Naive thymus-derived CD4-positive, alpha-beta T cell (primary cell): ENCODE measurements at regions of chr5 and their contacts with region 1.

Region 1: DNA sequence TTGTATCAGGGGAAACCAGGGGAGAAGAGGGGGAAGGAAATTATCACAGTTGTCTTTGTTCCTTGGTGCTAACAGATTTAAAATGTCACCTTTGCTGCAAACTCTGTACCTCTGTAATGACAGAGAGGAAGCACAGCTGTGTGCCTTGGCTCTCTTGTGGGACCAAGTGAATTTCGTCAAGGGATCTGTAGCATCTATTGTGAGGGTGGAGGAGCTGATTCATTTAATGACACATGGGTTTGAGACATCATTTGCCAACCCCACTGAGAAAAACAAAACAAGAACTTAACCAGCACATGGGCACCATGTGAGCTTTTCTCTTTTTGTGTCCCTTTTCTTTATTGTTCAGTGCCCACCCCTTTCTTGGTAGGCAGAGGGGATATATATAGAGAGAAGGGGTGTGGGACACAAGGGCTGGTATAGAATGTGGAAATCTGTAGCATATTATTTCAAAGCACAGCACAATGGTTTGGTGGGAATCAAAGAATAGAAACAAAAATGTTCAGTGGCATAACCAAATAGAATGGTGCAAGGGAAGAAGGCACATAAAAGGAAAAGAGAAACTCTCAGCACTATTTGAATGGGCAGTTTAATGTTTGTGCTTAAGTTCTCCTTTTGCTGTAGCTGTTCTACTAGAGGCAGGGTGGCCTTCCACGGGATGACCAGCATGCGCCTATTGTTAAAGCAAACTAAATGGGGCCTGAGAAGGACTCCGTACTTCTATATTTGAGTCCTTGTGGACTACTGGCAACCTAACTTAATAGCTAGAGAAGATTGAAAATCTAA is 63.3 kb downstream of the LIX1 start:
- DNase-seq: no peak
- ATAC-seq: peak; percentile 66
- H3K4me3 ChIP-seq: no peak overlapping the region
- H3K4me3 Mint-ChIP-seq: no peak overlapping the region
- H3K27ac ChIP-seq: no peak overlapping the region
- H3K27ac Mint-ChIP-seq: peak overlapping the region in 1 of 9 donors; percentile 18
- H3K4me1 ChIP-seq: no peaks in the 10 kb centered on the region
- H3K4me1 Mint-ChIP-seq: peaks cover 7 to 19% (median 13%) of the 10 kb centered on the region in 7 donors
- H3K27me3 ChIP-seq: no peaks in the 10 kb centered on the region
- H3K27me3 Mint-ChIP-seq: peaks cover 0 to 33% (median 0%) of the 10 kb centered on the region in 5 donors

Region 2: GRCh38 chr5:95996904-95997723 is 1082.0 kb before region 1 on chr5:
- CTCF ChIA-PET with region 1: no interaction called
- POLR2A ChIA-PET with region 1: no interaction called
- intact Hi-C with region 1: loop called in 1 of 2 experiments (anchors 5 kb)
- DNase-seq: no peak
- ATAC-seq: no peak
- H3K4me3 ChIP-seq: no peak overlapping the region
- H3K4me3 Mint-ChIP-seq: no peak overlapping the region
- H3K27ac ChIP-seq: no peak overlapping the region
- H3K27ac Mint-ChIP-seq: no peak overlapping the region
- H3K4me1 ChIP-seq: no peaks in the 10 kb centered on the region
- H3K4me1 Mint-ChIP-seq: no peaks in the 10 kb centered on the region
- H3K27me3 ChIP-seq: peaks cover 0 to 4% of the 10 kb centered on the region in 2 donors
- H3K27me3 Mint-ChIP-seq: peaks cover 4 to 28% (median 14%) of the 10 kb centered on the region in 5 donors

Region 3: DNA sequence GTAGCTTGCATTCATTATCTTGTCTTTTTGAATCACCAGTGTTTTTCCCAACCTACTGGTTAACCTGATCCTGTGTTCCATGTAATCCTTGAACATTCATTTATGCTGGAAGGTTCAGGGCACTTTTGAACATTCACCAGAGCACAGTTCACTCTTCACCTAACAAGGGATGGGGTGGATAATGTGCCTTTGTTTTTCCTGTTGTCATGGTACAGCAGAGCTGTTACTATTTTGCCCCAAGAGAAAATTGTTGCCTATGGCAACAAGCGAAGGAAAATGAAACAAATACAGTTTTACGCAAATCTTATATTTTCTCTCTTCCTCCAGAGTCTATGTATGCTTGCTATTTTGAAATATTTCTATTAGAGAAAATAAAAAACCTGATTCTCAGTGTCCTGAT is 164.2 kb after region 1 on chr5:
- CTCF ChIA-PET with region 1: no interaction called
- POLR2A ChIA-PET with region 1: no interaction called
- intact Hi-C with region 1: no loop called
- DNase-seq: no peak
- ATAC-seq: no peak
- H3K4me3 ChIP-seq: no peak overlapping the region
- H3K4me3 Mint-ChIP-seq: no peak overlapping the region
- H3K27ac ChIP-seq: no peak overlapping the region
- H3K27ac Mint-ChIP-seq: no peak overlapping the region
- H3K4me1 ChIP-seq: no peaks in the 10 kb centered on the region
- H3K4me1 Mint-ChIP-seq: no peaks in the 10 kb centered on the region
- H3K27me3 ChIP-seq: no peaks in the 10 kb centered on the region
- H3K27me3 Mint-ChIP-seq: peaks cover 0 to 6% (median 0%) of the 10 kb centered on the region in 5 donors